Caco-2 (cell line): ENCODE measurements at regions of chr13 and their contacts with region 1.

Region 1: GRCh38 chr13:27997904-27998522 is 9.5 kb upstream of the URAD start:
- DNase-seq: peak; percentile 80 to 82
- H3K4me3 ChIP-seq: no peak overlapping the region
- H3K4me3 Mint-ChIP-seq: no peak overlapping the region
- H3K27ac Mint-ChIP-seq: no peak overlapping the region
- H3K4me1 ChIP-seq: no peaks in the 10 kb centered on the region
- H3K4me1 Mint-ChIP-seq: peaks cover 7% of the 10 kb centered on the region
- H3K27me3 ChIP-seq: no peaks in the 10 kb centered on the region
- H3K27me3 Mint-ChIP-seq: no peaks in the 10 kb centered on the region
- CTCF ChIP-seq: peak; percentile 65 to 82

Region 2: DNA sequence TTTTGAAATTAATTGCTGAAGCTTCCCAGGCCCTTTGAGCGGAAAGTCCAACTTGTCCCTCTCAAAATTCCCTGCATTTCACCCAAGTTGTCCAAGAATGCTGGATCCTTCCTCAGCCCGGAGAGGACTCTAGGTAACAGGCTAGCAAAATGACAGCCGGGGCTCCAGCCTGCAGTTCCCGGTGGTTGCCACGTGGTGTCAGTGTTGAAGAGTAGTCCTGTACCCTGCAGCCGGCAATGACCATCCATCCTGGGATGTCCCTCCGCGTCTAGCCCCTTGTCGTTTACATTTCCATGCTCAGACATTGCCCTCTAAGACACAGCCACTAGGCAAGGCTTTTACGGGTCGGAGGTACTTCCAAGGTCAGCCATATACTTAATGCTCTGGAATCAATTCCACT is 516.2 kb before region 1 on chr13:
- CTCF ChIA-PET with region 1: no interaction called
- POLR2A ChIA-PET with region 1: interaction called, 12 read pairs
- intact Hi-C with region 1: no loop called
- DNase-seq: peak; percentile 65 to 70
- H3K4me3 ChIP-seq: no peak overlapping the region
- H3K4me3 Mint-ChIP-seq: no peak overlapping the region
- H3K27ac Mint-ChIP-seq: no peak overlapping the region
- H3K4me1 ChIP-seq: peaks cover 9% of the 10 kb centered on the region
- H3K4me1 Mint-ChIP-seq: peaks cover 9% of the 10 kb centered on the region
- H3K27me3 ChIP-seq: no peaks in the 10 kb centered on the region
- H3K27me3 Mint-ChIP-seq: no peaks in the 10 kb centered on the region
- CTCF ChIP-seq: peak; percentile 65 to 76

Region 3: GRCh38 chr13:27783111-27783510 is 214.9 kb before region 1 on chr13:
- CTCF ChIA-PET with region 1: no interaction called
- POLR2A ChIA-PET with region 1: no interaction called
- intact Hi-C with region 1: loop called (anchors 5 kb)
- DNase-seq: peak in 1 of 2 experiments; percentile 32
- H3K4me3 ChIP-seq: no peak overlapping the region
- H3K4me3 Mint-ChIP-seq: no peak overlapping the region
- H3K27ac Mint-ChIP-seq: no peak overlapping the region
- H3K4me1 ChIP-seq: peaks cover 5% of the 10 kb centered on the region; the same call in 1 of the 2 replicates
- H3K4me1 Mint-ChIP-seq: peaks cover 6% of the 10 kb centered on the region
- H3K27me3 ChIP-seq: no peaks in the 10 kb centered on the region
- H3K27me3 Mint-ChIP-seq: peaks cover 15% of the 10 kb centered on the region
- CTCF ChIP-seq: peak; percentile 23 to 41

Region 4: DNA sequence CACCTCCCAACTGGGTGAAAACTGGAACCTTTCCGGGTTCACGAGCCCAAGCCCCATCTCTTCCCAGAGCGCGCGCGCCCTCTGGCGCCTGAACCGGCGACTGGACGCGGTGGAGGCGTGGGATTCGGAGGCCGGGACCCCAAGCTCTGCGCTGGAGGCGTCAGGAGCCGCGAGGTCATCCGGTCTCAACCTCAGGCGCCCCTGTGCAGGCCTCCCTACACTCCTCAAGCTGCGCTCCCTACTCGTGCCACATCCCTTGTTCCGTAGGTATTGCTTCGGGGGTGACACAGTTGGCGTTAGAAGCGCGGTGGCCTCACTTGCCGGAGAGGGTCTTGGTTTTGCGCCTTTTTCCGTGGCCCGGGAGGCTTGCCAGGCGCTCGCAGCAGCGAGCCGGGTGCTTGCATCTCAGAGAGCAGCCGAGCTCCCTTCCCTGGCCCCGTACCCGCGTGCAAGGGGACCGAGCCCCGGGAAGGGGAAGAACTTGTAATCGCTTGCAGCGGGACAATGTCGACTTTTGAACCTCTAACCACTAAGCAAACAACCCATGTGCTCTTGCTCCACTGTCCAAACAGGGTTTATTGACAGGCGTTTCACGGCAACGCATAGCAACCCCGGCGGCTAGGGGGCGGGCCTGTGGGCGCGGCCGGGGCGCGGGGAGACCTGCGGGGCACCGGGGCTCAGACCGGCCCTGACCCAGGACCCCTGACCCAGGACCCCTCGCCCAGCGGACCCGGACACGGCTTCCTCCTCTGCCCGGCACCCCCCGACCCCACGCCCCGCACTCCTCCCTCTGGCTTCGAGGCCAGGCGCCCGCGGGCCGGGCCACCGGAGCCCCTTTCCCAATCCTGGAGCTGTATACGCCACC is 37.4 kb before region 1 on chr13:
- CTCF ChIA-PET with region 1: no interaction called
- POLR2A ChIA-PET with region 1: interaction called, 6 read pairs
- intact Hi-C with region 1: loop called (anchors 1 kb)
- DNase-seq: peak; percentile 96
- H3K4me3 ChIP-seq: peak overlapping the region; percentile 35
- H3K4me3 Mint-ChIP-seq: peak overlapping the region; percentile 52
- H3K27ac Mint-ChIP-seq: peak overlapping the region; percentile 66
- H3K4me1 ChIP-seq: peaks cover 88% of the 10 kb centered on the region
- H3K4me1 Mint-ChIP-seq: peaks cover 32% of the 10 kb centered on the region
- H3K27me3 ChIP-seq: no peaks in the 10 kb centered on the region
- H3K27me3 Mint-ChIP-seq: no peaks in the 10 kb centered on the region
- CTCF ChIP-seq: peak; percentile 73 to 78

Region 5: DNA sequence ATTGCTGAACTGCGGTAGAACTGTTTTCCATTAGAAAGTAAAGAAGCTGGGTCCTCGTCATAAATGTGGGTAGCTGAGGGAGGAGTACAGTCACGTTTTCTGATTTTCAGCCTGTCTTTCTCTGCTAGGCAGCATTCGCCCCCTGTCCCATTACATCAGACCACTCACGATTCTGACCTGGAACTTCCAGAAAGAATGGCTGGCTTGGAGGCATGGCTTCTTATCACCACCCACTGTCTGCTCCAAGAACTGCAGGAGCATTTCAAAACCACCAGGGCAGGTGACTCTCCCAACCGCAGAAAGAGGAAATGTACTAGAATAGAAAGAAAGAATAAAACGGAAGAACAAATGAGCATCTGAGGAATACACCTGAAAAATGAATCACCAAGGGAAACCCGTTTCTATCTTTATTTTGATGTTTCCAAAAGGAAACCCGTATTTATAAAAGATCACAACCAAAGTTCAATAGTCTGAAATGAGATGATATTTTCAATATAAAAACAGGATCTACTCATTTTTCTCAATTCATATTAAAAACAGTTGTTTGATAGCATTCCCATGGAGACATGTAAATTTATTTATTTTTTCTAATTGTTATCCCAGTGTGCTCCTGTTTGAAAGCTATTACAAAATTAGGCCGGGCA is 638.8 kb after region 1 on chr13:
- CTCF ChIA-PET with region 1: no interaction called
- POLR2A ChIA-PET with region 1: no interaction called
- intact Hi-C with region 1: no loop called
- DNase-seq: peak; percentile 70 to 79
- H3K4me3 ChIP-seq: no peak overlapping the region
- H3K4me3 Mint-ChIP-seq: peak overlapping the region; percentile 27
- H3K27ac Mint-ChIP-seq: peak overlapping the region; percentile 69
- H3K4me1 ChIP-seq: 0 out of 2 replicates have a peak, but pooled peaks cover 12% of the 10 kb centered on the region
- H3K4me1 Mint-ChIP-seq: peaks cover 8% of the 10 kb centered on the region
- H3K27me3 ChIP-seq: no peaks in the 10 kb centered on the region
- H3K27me3 Mint-ChIP-seq: no peaks in the 10 kb centered on the region
- CTCF ChIP-seq: peak; percentile 89 to 96